ENCODE measurements at regions of chr15 and their contacts with region 1.

Region 1: DNA sequence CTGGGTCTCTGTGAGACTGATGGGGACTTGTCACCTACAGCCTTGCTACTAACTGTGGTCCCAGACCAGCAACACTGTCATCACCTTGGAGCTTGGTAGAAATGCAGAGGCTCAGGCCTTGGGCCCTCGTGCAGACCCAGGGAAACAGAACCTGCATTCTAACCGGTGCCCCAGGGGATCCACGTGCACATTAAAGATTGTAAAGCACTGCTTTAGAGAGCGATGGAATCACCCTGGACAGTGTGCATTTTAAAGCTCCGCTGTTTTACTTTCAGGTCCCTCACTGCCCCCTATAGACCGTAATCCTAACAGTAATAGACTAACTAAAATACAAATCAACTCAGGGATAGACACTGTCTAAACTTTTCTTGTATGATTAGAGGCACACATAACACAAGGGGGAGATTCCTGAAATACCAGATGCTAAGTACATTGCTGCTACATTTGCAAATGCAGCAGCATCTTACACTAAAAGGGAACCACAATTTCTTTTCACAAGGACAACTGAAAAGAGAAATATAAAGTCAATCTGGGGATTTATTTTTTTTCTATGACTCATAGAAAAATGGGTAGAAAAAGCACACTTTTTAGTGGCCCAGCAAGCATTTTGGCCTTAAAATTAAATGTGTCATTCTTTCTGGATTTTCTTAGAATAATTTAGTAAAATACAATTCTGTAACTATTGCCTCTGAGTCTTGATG is 10.5 kb upstream of the SH3GL3 start:
- DNase-seq: peak in 1 of 2 experiments; percentile 35
- H3K4me3 ChIP-seq: no peak overlapping the region
- H3K4me3 Mint-ChIP-seq: no peak overlapping the region
- H3K27ac Mint-ChIP-seq: no peak overlapping the region
- H3K4me1 ChIP-seq: peaks cover 5% of the 10 kb centered on the region; the same call in 1 of the 2 replicates
- H3K4me1 Mint-ChIP-seq: no peaks in the 10 kb centered on the region
- H3K27me3 ChIP-seq: no peaks in the 10 kb centered on the region
- H3K27me3 Mint-ChIP-seq: no peaks in the 10 kb centered on the region
- CTCF ChIP-seq: peak; percentile 29 to 43

Region 2: DNA sequence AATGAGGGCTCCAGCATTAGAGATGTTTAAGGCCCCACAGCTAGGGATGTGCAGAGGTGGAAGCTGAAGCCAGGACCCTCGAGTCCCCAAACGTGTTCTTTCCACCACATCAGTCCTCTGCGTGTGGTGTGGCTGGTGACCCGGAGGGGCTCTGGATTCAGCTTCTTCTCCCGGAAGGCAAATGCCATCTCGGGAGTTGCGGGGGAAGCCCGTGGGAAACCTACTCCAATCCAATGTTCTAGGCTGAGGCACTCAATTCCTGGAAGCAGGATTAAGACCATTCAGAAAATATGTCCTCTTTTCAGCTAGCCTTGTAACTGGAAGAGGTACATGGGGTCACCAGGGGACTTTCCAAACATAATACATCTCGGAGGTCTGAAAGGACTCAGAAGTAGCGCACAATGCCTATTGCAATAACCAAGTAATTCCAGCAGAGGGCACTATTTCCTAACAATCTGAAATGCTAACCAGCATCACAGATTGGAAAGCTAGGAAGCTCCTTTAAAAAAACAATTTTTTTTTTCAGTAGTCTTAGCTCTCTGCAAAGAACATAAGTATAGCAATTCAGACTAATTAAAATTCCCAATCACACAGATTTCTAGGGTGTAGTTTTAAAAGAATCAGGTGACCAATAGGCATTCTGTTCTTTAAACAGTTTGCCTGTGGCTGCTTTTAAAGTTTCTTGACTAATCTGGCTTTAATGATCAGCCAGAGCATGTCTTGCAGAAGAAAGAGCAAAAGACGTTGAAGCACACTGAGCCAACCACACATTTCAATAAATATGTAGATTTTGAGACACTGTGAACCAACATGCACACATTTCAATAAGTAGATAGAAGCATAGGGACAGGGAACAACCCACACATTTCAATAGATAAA is 188.2 kb before region 1 on chr15:
- CTCF ChIA-PET with region 1: interaction called, 56 read pairs
- POLR2A ChIA-PET with region 1: no interaction called
- intact Hi-C with region 1: loop called (anchors 1 kb)
- DNase-seq: peak in 1 of 2 experiments; percentile 66
- H3K4me3 ChIP-seq: no peak overlapping the region
- H3K4me3 Mint-ChIP-seq: no peak overlapping the region
- H3K27ac Mint-ChIP-seq: no peak overlapping the region
- H3K4me1 ChIP-seq: no peaks in the 10 kb centered on the region
- H3K4me1 Mint-ChIP-seq: no peaks in the 10 kb centered on the region
- H3K27me3 ChIP-seq: no peaks in the 10 kb centered on the region
- H3K27me3 Mint-ChIP-seq: peaks cover 10% of the 10 kb centered on the region
- CTCF ChIP-seq: peak; percentile 73 to 87

Region 3: GRCh38 chr15:83380682-83381081 is 55.9 kb before region 1 on chr15:
- CTCF ChIA-PET with region 1: interaction called, 6 read pairs
- POLR2A ChIA-PET with region 1: no interaction called
- intact Hi-C with region 1: loop called (anchors 2 kb)
- DNase-seq: peak; percentile 78
- H3K4me3 ChIP-seq: no peak overlapping the region
- H3K4me3 Mint-ChIP-seq: no peak overlapping the region
- H3K27ac Mint-ChIP-seq: no peak overlapping the region
- H3K4me1 ChIP-seq: no peaks in the 10 kb centered on the region
- H3K4me1 Mint-ChIP-seq: peaks cover 5% of the 10 kb centered on the region
- H3K27me3 ChIP-seq: no peaks in the 10 kb centered on the region
- H3K27me3 Mint-ChIP-seq: peaks cover 4% of the 10 kb centered on the region
- CTCF ChIP-seq: peak; percentile 57 to 82

Region 4: DNA sequence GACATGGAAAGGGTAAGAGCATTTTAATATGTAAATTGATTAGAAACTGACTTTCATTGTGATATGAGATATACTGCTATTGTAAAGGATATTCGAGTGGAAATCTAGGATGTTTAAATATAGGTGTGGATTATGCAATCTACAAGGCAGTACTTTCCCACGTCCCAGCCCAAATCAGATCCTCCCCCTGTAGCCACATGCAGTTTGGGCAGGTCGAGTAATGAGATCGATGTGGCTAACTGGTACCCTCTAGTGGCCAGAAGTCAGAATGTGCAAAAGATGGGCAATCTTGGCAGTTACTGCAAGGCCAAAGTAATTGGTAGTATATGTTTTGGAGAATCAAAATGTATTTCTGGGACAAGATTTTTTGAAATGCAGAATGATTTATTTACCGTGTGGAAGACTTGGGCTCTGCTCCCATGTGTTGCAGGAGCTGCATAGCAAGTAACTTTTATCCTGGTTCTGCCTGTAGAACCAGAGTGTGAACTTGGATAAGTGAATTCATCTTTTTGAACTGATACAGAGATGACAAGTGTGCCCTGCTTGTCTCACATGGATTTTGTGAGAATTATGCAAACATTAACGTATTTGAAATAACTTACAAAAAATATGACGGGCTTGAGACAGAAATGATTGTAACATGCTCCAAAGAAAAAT is 122.8 kb after region 1 on chr15:
- CTCF ChIA-PET with region 1: interaction called, 12 read pairs
- POLR2A ChIA-PET with region 1: no interaction called
- intact Hi-C with region 1: loop called (anchors 1 kb)
- DNase-seq: peak; percentile 57 to 75
- H3K4me3 ChIP-seq: no peak overlapping the region
- H3K4me3 Mint-ChIP-seq: no peak overlapping the region
- H3K27ac Mint-ChIP-seq: no peak overlapping the region
- H3K4me1 ChIP-seq: no peaks in the 10 kb centered on the region
- H3K4me1 Mint-ChIP-seq: no peaks in the 10 kb centered on the region
- H3K27me3 ChIP-seq: no peaks in the 10 kb centered on the region
- H3K27me3 Mint-ChIP-seq: peaks cover 3% of the 10 kb centered on the region
- CTCF ChIP-seq: peak; percentile 75 to 78

Region 5: GRCh38 chr15:83571820-83572707 is 135.5 kb after region 1 on chr15:
- CTCF ChIA-PET with region 1: no interaction called
- POLR2A ChIA-PET with region 1: no interaction called
- intact Hi-C with region 1: loop called (anchors 1 kb)
- DNase-seq: peak in 1 of 2 experiments; percentile 14
- H3K4me3 ChIP-seq: no peak overlapping the region
- H3K4me3 Mint-ChIP-seq: no peak overlapping the region
- H3K27ac Mint-ChIP-seq: no peak overlapping the region
- H3K4me1 ChIP-seq: no peaks in the 10 kb centered on the region
- H3K4me1 Mint-ChIP-seq: no peaks in the 10 kb centered on the region
- H3K27me3 ChIP-seq: no peaks in the 10 kb centered on the region; the same call in 1 of the 2 replicates
- H3K27me3 Mint-ChIP-seq: peaks cover 6% of the 10 kb centered on the region
- CTCF ChIP-seq: peak; percentile 50 to 51

Region 6: DNA sequence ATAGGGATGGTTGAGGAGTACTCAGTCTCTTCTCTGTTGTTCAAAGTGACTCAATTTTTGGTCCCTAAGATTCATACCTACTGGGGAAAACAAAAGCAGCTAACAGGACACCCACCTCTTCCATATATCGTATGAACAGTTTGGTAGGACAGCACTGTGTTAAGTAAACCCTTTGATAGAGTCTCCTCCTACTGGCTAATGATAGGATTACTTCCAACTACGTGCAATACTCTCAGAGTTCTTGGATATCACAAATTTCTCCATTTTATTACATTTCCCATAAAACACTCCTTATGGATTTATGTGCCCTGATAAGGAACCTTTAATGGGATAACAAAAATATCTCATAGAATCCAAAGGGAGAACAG is 598.8 kb after region 1 on chr15:
- CTCF ChIA-PET with region 1: no interaction called
- POLR2A ChIA-PET with region 1: no interaction called
- intact Hi-C with region 1: loop called (anchors 5 kb)
- DNase-seq: peak in 1 of 2 experiments; percentile 24
- H3K4me3 ChIP-seq: no peak overlapping the region
- H3K4me3 Mint-ChIP-seq: no peak overlapping the region
- H3K27ac Mint-ChIP-seq: no peak overlapping the region
- H3K4me1 ChIP-seq: no peaks in the 10 kb centered on the region
- H3K4me1 Mint-ChIP-seq: no peaks in the 10 kb centered on the region
- H3K27me3 ChIP-seq: no peaks in the 10 kb centered on the region
- H3K27me3 Mint-ChIP-seq: peaks cover 3% of the 10 kb centered on the region
- CTCF ChIP-seq: peak; percentile 23 to 59